CD8-positive, alpha-beta memory T cell (primary cell): ENCODE measurements at regions of chr6 and their contacts with region 1.

Region 1: GRCh38 chr6:25027221-25027916 is 91.6 kb upstream of the RIPOR2 start:
- DNase-seq: peak; percentile 63 to 85 (median 67)
- H3K4me3 ChIP-seq: peak overlapping the region; percentile 44
- H3K4me3 Mint-ChIP-seq: peak overlapping the region; percentile 63 to 90 (median 81)
- H3K27ac ChIP-seq: peak overlapping the region; percentile 11
- H3K27ac Mint-ChIP-seq: peak overlapping the region; percentile 78 to 96 (median 88)
- H3K4me1 ChIP-seq: peaks cover 35% of the 10 kb centered on the region
- H3K4me1 Mint-ChIP-seq: peaks cover 58 to 74% (median 61%) of the 10 kb centered on the region in 3 donors
- H3K27me3 ChIP-seq: no peaks in the 10 kb centered on the region
- H3K27me3 Mint-ChIP-seq: no peaks in the 10 kb centered on the region

Region 2: GRCh38 chr6:25042036-25042521 is 14.7 kb after region 1 on chr6:
- CTCF ChIA-PET with region 1: interaction called, 77 read pairs
- POLR2A ChIA-PET with region 1: interaction called, 12 read pairs
- DNase-seq: peak; percentile 38 to 68 (median 52)
- H3K4me3 ChIP-seq: peak overlapping the region; percentile 85
- H3K4me3 Mint-ChIP-seq: peak overlapping the region; percentile 94 to 99 (median 96)
- H3K27ac ChIP-seq: peak overlapping the region; percentile 67
- H3K27ac Mint-ChIP-seq: peak overlapping the region; percentile 93 to 100 (median 98)
- H3K4me1 ChIP-seq: peaks cover 55% of the 10 kb centered on the region
- H3K4me1 Mint-ChIP-seq: peaks cover 57 to 66% (median 64%) of the 10 kb centered on the region in 3 donors
- H3K27me3 ChIP-seq: no peaks in the 10 kb centered on the region
- H3K27me3 Mint-ChIP-seq: no peaks in the 10 kb centered on the region

Region 3: DNA sequence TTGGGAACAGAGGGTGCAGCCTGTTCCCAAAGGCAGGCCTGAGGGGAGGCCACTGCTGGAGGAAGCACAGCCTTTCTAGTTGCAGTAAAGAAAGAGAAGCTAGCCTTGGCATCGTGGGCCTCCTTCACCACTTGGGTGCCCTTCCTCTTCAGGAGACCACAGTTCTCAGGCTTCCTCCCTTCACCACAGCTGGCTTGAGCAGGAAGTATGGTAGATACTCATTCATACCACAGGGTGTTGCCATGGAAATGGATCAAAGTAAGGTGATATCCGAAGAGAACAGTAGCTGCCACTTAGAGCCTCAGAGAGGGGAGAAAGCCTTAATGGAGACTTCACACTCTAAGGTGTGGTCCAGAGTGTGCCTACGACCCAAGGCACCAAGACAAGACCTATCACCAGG is 28.8 kb after region 1 on chr6:
- CTCF ChIA-PET with region 1: interaction called, 10 read pairs
- POLR2A ChIA-PET with region 1: interaction called, 5 read pairs
- DNase-seq: peak; percentile 34 to 87 (median 73)
- H3K4me3 ChIP-seq: peak overlapping the region; percentile 16
- H3K4me3 Mint-ChIP-seq: peak overlapping the region; percentile 11 to 79 (median 70)
- H3K27ac ChIP-seq: peak overlapping the region; percentile 41
- H3K27ac Mint-ChIP-seq: peak overlapping the region; percentile 84 to 99 (median 94)
- H3K4me1 ChIP-seq: peaks cover 46% of the 10 kb centered on the region
- H3K4me1 Mint-ChIP-seq: peaks cover 58 to 70% (median 61%) of the 10 kb centered on the region in 3 donors
- H3K27me3 ChIP-seq: no peaks in the 10 kb centered on the region
- H3K27me3 Mint-ChIP-seq: peaks cover 0 to 2% of the 10 kb centered on the region in 2 donors

Region 4: GRCh38 chr6:25061289-25061936 is 34.0 kb after region 1 on chr6:
- CTCF ChIA-PET with region 1: interaction called, 12 read pairs
- POLR2A ChIA-PET with region 1: interaction called, 5 read pairs
- DNase-seq: no peak
- H3K4me3 ChIP-seq: no peak overlapping the region
- H3K4me3 Mint-ChIP-seq: no peak overlapping the region
- H3K27ac ChIP-seq: no peak overlapping the region
- H3K27ac Mint-ChIP-seq: no peak overlapping the region
- H3K4me1 ChIP-seq: peaks cover 13% of the 10 kb centered on the region
- H3K4me1 Mint-ChIP-seq: peaks cover 11 to 23% (median 12%) of the 10 kb centered on the region in 3 donors
- H3K27me3 ChIP-seq: no peaks in the 10 kb centered on the region
- H3K27me3 Mint-ChIP-seq: no peaks in the 10 kb centered on the region

Region 5: GRCh38 chr6:25070547-25071366 is 43.4 kb after region 1 on chr6:
- CTCF ChIA-PET with region 1: interaction called, 78 read pairs
- POLR2A ChIA-PET with region 1: interaction called, 21 read pairs
- DNase-seq: peak; percentile 70 to 87 (median 79)
- H3K4me3 ChIP-seq: no peak overlapping the region
- H3K4me3 Mint-ChIP-seq: peak overlapping the region in 6 of 7 donors; percentile 50 to 86 (median 74)
- H3K27ac ChIP-seq: no peak overlapping the region
- H3K27ac Mint-ChIP-seq: peak overlapping the region in 7 of 8 donors; percentile 52 to 89 (median 81)
- H3K4me1 ChIP-seq: no peaks in the 10 kb centered on the region
- H3K4me1 Mint-ChIP-seq: peaks cover 5 to 9% (median 5%) of the 10 kb centered on the region in 3 donors
- H3K27me3 ChIP-seq: no peaks in the 10 kb centered on the region
- H3K27me3 Mint-ChIP-seq: no peaks in the 10 kb centered on the region